Common myeloid progenitor, CD34-positive (primary cell): ENCODE measurements at regions of chr11 and their contacts with region 1.

Region 1: DNA sequence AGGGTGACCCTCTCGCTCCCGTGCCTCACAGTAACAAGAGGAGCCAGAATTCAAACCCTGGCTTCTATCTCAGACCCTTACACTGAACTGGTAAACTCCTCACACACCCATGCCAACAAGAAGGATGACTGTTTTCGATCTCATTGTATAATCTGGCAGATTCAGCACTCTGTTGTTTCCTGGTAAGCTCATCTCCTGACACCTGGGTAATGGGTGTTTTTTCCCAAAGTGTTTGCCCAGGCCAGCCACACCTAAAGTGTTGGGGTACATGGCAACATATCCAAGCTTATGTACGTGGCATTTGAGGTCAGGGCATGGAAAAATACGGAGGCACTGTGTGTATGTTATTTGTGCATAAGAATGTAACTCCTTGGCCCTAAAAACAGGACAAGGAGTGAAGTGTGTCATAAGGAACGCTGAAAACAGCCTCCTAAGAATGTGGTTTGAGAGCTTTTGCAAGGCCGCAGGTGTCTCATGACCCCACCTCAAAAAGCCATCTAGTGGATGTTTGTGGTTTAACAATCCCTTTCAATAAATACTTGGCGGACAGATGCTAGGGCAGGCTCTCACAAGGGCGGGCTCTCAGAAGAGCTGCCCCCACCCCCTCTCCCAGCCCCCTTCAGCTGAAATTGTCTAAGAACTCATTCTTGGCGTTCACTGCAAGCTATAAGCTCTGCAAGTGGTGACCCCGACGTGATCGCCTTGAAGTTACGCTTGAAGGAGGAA is at the start of gene MS4A15:
- DNase-seq: peak; percentile 52 to 77 (median 75)
- H3K4me3 ChIP-seq: no peak within 1 kb of the TSS
- H3K27ac ChIP-seq: no peak within 1 kb of the TSS
- H3K4me1 ChIP-seq: peaks cover 4 to 21% (median 15%) of the 10 kb centered on the region in 4 experiments
- H3K27me3 ChIP-seq: peaks cover 0 to 5% (median 2%) of the 10 kb centered on the region in 5 experiments

Region 2: DNA sequence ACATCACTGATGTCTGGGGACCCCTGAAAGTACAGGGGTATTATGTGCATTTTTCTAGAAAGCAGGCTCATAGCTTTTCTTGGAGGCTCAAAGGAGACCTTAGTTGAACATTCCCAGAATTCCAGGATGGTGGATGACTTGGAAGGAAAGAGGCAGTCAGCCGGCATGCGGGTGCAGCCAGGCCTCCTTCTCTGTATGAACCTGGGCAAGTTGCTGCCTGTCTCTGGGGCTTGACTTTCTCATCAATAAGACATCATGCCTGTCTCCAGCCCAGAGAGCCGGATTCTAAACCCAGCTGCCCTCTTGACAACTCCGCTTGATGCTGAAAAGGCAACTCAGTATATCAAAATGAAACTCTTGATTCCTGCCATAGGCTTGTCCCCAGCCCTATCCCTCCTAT is 12.8 kb after region 1 on chr11:
- CTCF ChIA-PET with region 1: interaction called, 100 read pairs
- POLR2A ChIA-PET with region 1: no interaction called
- DNase-seq: no peak
- H3K4me3 ChIP-seq: no peak overlapping the region
- H3K27ac ChIP-seq: no peak overlapping the region
- H3K4me1 ChIP-seq: no peaks in the 10 kb centered on the region
- H3K27me3 ChIP-seq: peaks cover 0 to 4% (median 2%) of the 10 kb centered on the region in 5 experiments